Activated T-helper 2 cell treated with anti-CD3 and anti-CD28 coated beads, Interferon-gamma antibody, Interleukin-2, Interleukin-4, amounts not matched to agents 10 μg/mL and 5 μg/mL and 100 μg/mL, durations not matched to agents 14 hours and 24 hours and 36 hours (primary cell): ENCODE measurements at regions of chr20 and their contacts with region 1.

Region 1: DNA sequence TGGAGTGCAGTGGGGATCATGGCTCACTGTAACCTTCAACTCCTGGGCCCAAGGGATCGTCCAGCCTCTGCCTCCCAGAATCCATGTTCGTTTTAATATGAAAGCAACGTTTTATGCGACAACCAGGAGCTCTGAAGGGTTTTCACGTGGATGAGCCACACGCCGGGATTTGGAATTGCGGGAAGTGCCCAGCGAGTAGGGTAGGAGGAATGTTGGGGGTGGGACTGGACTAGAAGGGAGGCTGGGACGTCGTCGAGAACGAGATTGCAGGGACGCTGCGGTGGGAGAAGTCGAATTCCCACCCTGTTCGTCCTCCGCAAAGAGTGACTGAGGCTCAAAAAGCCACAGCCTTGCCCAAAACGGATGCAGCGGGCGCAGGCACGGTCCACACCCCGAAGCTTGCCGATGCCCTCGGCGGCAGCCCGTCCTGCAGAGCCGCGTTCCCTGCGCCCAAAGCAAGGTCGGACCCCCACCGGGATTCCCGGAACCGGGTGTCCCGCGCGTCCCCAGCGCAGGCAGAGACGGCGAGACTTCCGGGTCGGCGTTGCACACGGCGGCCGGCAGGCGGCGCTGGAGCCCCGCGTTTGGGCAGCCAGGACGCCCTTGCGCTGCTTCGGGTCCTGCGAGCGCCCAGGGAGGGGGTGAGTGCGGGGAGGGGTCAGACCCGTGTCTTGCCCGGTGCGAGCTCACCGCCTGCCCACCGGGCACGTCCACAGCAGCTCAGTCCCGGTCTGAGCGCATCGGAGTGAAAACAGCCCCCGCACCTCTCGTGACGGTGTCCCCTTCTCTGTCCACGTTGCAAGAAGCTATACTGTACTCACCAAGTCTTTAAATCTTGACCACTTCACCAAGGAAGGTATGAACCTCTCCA is 87.8 kb downstream of the DHX35 start:
- DNase-seq: peak; percentile 75
- H3K4me3 Mint-ChIP-seq: peak overlapping the region; percentile 83
- H3K27ac Mint-ChIP-seq: peak overlapping the region; percentile 68
- H3K4me1 Mint-ChIP-seq: peaks cover 3% of the 10 kb centered on the region
- H3K27me3 Mint-ChIP-seq: peaks cover 12% of the 10 kb centered on the region

Region 2: DNA sequence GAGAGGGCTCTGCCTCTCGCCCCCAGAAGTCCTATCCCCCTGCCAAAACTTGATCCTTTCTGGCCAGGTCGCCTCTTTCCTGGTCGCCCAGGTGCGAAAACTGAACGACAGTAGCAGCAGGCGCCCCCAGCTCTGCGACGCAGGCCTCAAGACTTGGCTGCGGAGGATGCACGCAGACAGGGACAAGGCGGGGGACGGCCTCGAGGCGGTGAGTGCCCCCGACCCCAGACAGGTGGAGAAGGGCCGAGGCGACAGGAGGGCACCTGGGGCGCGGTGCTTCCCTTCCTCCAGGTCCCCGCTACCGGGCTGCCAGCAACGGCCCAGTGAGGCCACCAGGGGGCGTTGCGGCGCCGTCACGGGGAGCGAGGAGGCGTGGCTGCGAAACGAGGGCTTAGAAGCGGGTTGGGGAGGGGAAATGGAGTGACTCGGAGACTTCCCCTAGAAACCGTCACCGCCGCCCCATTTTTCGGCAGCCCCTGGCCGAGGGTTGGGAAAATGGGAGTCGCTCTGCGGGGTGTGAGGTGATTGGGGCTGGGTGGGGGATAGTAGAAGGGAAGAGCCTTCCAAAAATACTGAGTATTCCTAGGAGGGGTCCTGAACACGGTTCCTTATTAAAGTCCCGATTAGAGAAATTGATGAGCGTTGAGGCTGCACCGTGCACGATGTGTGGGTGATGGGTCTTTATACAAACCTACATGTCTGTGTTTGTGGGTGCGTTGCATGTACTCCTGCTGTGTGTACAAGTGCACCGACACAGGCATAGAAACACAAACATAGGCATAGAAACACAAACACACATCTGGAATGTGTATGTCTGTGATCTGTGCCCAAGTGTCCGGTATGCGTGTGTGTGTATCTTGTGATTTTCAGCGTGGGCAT is 403.7 kb before region 1 on chr20:
- intact Hi-C with region 1: loop called (anchors 1 kb)
- DNase-seq: peak; percentile 87
- H3K4me3 Mint-ChIP-seq: peak overlapping the region; percentile 77
- H3K27ac Mint-ChIP-seq: peak overlapping the region; percentile 23
- H3K4me1 Mint-ChIP-seq: peaks cover 7% of the 10 kb centered on the region
- H3K27me3 Mint-ChIP-seq: peaks cover 33% of the 10 kb centered on the region

Region 3: DNA sequence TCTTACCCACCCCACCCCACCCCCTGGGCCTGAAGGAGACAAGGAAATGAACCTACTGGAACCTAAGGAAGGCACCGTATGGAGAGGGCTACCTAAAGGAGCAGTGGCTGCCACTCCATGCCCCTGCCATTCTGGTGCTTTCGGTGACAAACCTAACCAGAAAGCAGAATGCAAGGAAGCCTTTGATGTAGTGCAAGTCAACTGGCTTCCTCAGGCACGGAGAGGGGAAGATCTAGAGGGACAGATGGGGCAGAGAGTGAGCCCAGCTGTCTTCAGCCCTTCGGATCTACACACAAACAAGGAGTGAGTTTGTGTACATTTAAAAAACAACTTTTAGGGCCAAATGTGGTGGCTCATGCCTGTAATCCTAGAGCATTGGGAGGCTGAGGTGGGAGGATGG is 205.0 kb before region 1 on chr20:
- intact Hi-C with region 1: no loop called
- DNase-seq: no peak
- H3K4me3 Mint-ChIP-seq: peak overlapping the region; percentile 71
- H3K27ac Mint-ChIP-seq: peak overlapping the region; percentile 95
- H3K4me1 Mint-ChIP-seq: peaks cover 83% of the 10 kb centered on the region
- H3K27me3 Mint-ChIP-seq: no peaks in the 10 kb centered on the region

Region 4: GRCh38 chr20:38997622-38998021 is 52.3 kb before region 1 on chr20:
- intact Hi-C with region 1: loop called (anchors 10 kb)
- DNase-seq: peak; percentile 39
- H3K4me3 Mint-ChIP-seq: peak overlapping the region; percentile 38
- H3K27ac Mint-ChIP-seq: peak overlapping the region; percentile 63
- H3K4me1 Mint-ChIP-seq: peaks cover 28% of the 10 kb centered on the region
- H3K27me3 Mint-ChIP-seq: no peaks in the 10 kb centered on the region

Region 5: DNA sequence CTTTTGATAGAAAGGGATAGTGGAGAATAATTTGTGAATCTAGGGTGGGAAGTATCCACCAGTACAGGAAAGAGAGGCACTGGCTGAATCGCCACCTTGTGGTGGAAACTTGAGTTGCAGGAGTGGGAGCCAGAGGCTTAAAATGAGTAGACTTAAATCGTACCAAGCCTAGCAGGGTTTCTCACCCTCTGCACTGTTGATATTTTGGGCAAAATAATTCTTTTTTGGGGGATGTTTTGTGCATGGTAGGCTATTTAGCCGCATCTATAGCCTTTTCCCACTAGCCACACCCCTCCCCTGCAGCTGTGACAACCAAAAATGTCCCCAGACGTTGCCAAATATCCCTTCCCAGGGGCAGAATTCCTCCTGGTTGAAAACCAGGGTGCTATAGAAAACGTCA is 31.3 kb after region 1 on chr20:
- intact Hi-C with region 1: loop called (anchors 1 kb)
- DNase-seq: peak; percentile 63
- H3K4me3 Mint-ChIP-seq: no peak overlapping the region
- H3K27ac Mint-ChIP-seq: no peak overlapping the region
- H3K4me1 Mint-ChIP-seq: peaks cover 3% of the 10 kb centered on the region
- H3K27me3 Mint-ChIP-seq: peaks cover 29% of the 10 kb centered on the region

Region 6: GRCh38 chr20:39326050-39326449 is 276.1 kb after region 1 on chr20:
- intact Hi-C with region 1: no loop called
- DNase-seq: no peak
- H3K4me3 Mint-ChIP-seq: no peak overlapping the region
- H3K27ac Mint-ChIP-seq: no peak overlapping the region
- H3K4me1 Mint-ChIP-seq: no peaks in the 10 kb centered on the region
- H3K27me3 Mint-ChIP-seq: no peaks in the 10 kb centered on the region